CD4-positive, alpha-beta memory T cell (primary cell): ENCODE measurements at regions of chr2 and their contacts with region 1.

Region 1: DNA sequence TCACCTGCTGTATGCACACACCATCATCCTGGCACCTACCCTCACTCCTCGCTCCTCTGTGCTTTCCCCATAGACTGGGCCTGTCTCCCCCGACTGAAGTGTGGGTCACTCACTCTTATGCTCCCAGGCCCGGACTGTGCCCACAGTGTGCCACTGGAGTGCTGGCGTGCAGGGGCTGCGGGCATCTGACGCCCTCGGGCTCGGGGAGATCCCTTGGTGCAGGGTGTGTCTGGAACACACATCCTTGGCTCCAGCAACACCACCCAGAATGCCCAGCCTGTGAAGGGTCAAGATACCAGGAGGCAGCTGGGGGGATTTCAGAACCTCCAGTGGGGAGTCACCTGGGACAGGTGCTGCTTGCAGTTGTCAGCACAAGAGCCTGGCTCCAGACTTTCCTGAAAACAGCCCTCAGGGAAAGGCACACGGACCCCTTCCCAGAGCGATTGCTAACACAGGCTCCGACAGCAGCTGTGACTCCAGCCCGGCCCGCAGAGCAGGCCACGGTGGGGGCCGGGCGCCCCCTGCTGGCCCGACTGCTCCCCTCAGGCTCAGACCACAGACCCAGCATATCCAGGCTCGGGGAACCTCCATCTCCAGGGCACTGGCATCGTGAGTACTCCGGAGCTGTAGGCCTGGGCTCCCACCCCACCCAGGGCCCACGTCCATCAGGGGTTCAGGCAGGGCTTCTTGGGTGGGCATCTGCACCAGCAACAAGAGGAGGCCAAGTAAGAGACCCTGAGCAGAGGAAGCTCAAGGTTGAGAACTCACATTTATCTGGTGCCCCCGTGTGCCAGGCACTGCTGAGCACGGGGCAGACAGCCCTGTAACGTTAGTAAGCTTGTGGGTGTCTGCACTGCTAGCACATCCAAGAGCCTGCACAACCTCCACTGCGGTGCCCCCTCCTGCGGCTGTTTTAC is 8.6 kb downstream of the HS1BP3 start:
- DNase-seq: peak; percentile 64 to 73 (median 70)
- H3K4me3 ChIP-seq: no peak overlapping the region
- H3K4me3 Mint-ChIP-seq: no peak overlapping the region
- H3K27ac ChIP-seq: no peak overlapping the region
- H3K27ac Mint-ChIP-seq: no peak overlapping the region
- H3K4me1 ChIP-seq: no peaks in the 10 kb centered on the region
- H3K4me1 Mint-ChIP-seq: peaks cover 5 to 13% (median 7%) of the 10 kb centered on the region in 4 donors
- H3K27me3 ChIP-seq: no peaks in the 10 kb centered on the region
- H3K27me3 Mint-ChIP-seq: no peaks in the 10 kb centered on the region

Region 2: GRCh38 chr2:20438334-20439192 is 203.8 kb before region 1 on chr2:
- CTCF ChIA-PET with region 1: interaction called, 92 read pairs
- POLR2A ChIA-PET with region 1: no interaction called
- intact Hi-C with region 1: loop called (anchors 1 kb)
- DNase-seq: no peak
- H3K4me3 ChIP-seq: no peak overlapping the region
- H3K4me3 Mint-ChIP-seq: no peak overlapping the region
- H3K27ac ChIP-seq: no peak overlapping the region
- H3K27ac Mint-ChIP-seq: no peak overlapping the region
- H3K4me1 ChIP-seq: no peaks in the 10 kb centered on the region
- H3K4me1 Mint-ChIP-seq: no peaks in the 10 kb centered on the region
- H3K27me3 ChIP-seq: no peaks in the 10 kb centered on the region
- H3K27me3 Mint-ChIP-seq: peaks cover 9 to 11% of the 10 kb centered on the region in 2 donors

Region 3: GRCh38 chr2:20629581-20630171 is 12.6 kb before region 1 on chr2:
- CTCF ChIA-PET with region 1: interaction called, 20 read pairs
- POLR2A ChIA-PET with region 1: no interaction called
- intact Hi-C with region 1: no loop called
- DNase-seq: no peak
- H3K4me3 ChIP-seq: no peak overlapping the region
- H3K4me3 Mint-ChIP-seq: no peak overlapping the region
- H3K27ac ChIP-seq: no peak overlapping the region
- H3K27ac Mint-ChIP-seq: no peak overlapping the region
- H3K4me1 ChIP-seq: no peaks in the 10 kb centered on the region
- H3K4me1 Mint-ChIP-seq: peaks cover 0 to 1% (median 0%) of the 10 kb centered on the region in 4 donors
- H3K27me3 ChIP-seq: no peaks in the 10 kb centered on the region
- H3K27me3 Mint-ChIP-seq: no peaks in the 10 kb centered on the region

Region 4: GRCh38 chr2:21096458-21096857 is 454.1 kb after region 1 on chr2:
- CTCF ChIA-PET with region 1: no interaction called
- POLR2A ChIA-PET with region 1: no interaction called
- intact Hi-C with region 1: no loop called
- DNase-seq: no peak
- H3K4me3 ChIP-seq: no peak overlapping the region
- H3K4me3 Mint-ChIP-seq: no peak overlapping the region
- H3K27ac ChIP-seq: no peak overlapping the region
- H3K27ac Mint-ChIP-seq: no peak overlapping the region
- H3K4me1 ChIP-seq: no peaks in the 10 kb centered on the region
- H3K4me1 Mint-ChIP-seq: no peaks in the 10 kb centered on the region
- H3K27me3 ChIP-seq: no peaks in the 10 kb centered on the region
- H3K27me3 Mint-ChIP-seq: peaks cover 6 to 8% of the 10 kb centered on the region in 2 donors